ENCODE measurements at regions of chr20 and their contacts with region 1.

Region 1: GRCh38 chr20:41339507-41340326 is 904 bp upstream of the LPIN3 start:
- DNase-seq: peak; percentile 88 to 99
- H3K4me3 ChIP-seq: peak overlapping the region in 3 of 4 experiments; percentile 34 to 62 (median 48); a peak in 7 of 8 replicates
- H3K27ac ChIP-seq: no peak overlapping the region
- H3K4me1 ChIP-seq: peaks cover 3 to 13% (median 6%) of the 10 kb centered on the region in 4 experiments; a peak in 5 of 7 replicates
- H3K27me3 ChIP-seq: peaks cover 0 to 7% (median 2%) of the 10 kb centered on the region in 4 experiments; a peak in 1 of 7 replicates
- CTCF ChIP-seq: peak; percentile 97 to 98 (median 97)
- EP300 ChIP-seq: no peak
- POLR2A ChIP-seq: no peak
- RAD21 ChIP-seq: peak; percentile 99

Region 2: GRCh38 chr20:41136680-41137613 is 202.8 kb before region 1 on chr20 and contains the start of gene PLCG1:
- CTCF ChIA-PET with region 1: interaction called, 25 read pairs
- POLR2A ChIA-PET with region 1: interaction called, 7 read pairs
- DNase-seq: peak; percentile 56 to 94
- H3K4me3 ChIP-seq: peak within 1 kb of the TSS; percentile 80 to 97 (median 90)
- H3K27ac ChIP-seq: peak within 1 kb of the TSS; percentile 93
- H3K4me1 ChIP-seq: peaks cover 25 to 40% (median 27%) of the 10 kb centered on the region in 4 experiments
- H3K27me3 ChIP-seq: peaks cover 0 to 9% (median 2%) of the 10 kb centered on the region in 4 experiments; a peak in 3 of 7 replicates
- CTCF ChIP-seq: no peak; a peak in 1 of 4 replicates
- EP300 ChIP-seq: no peak
- POLR2A ChIP-seq: peak; percentile 75 to 83
- RAD21 ChIP-seq: no peak
- total RNA-seq, gene PLCG1: 151 and 154 TPM in 2 replicates

Region 3: DNA sequence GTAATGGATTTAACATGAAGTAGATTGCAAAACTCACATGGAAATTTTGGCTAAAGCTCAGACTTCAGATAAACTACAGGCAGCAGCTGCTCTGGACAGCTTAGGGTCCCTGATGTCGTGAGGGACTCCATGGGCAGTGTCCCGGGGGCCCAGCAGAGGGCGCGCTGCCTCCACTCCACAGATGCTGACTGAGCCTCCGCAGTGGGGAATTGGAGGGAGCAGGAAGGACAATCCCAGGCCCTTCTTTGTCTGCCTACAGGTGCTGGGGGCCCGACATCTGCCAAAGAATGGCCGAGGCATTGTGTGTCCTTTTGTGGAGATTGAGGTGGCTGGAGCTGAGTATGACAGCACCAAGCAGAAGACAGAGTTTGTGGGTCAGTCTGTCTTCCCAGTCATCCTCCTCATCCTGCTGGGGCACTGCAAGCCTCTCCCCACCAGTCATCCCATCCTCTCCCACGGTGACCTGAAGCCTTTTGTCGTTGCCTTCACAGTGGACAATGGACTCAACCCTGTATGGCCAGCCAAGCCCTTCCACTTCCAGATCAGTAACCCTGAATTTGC is 166.5 kb before region 1 on chr20:
- CTCF ChIA-PET with region 1: interaction called, 112 read pairs
- POLR2A ChIA-PET with region 1: interaction called, 5 read pairs
- DNase-seq: peak; percentile 38 to 93
- H3K4me3 ChIP-seq: no peak overlapping the region
- H3K27ac ChIP-seq: no peak overlapping the region
- H3K4me1 ChIP-seq: no peaks in the 10 kb centered on the region
- H3K27me3 ChIP-seq: no peaks in the 10 kb centered on the region
- CTCF ChIP-seq: peak; percentile 95 to 98 (median 97)
- EP300 ChIP-seq: no peak
- POLR2A ChIP-seq: 0 out of 3 replicates have a peak, but pooled peaks of 1 of the 2 experiments have one; percentile 29
- RAD21 ChIP-seq: peak; percentile 94 to 98

Region 4: GRCh38 chr20:41200446-41201202 is 139.1 kb before region 1 on chr20:
- CTCF ChIA-PET with region 1: interaction called, 13 read pairs
- POLR2A ChIA-PET with region 1: no interaction called
- DNase-seq: no peak
- H3K4me3 ChIP-seq: no peak overlapping the region
- H3K27ac ChIP-seq: no peak overlapping the region
- H3K4me1 ChIP-seq: no peaks in the 10 kb centered on the region
- H3K27me3 ChIP-seq: no peaks in the 10 kb centered on the region
- CTCF ChIP-seq: no peak
- EP300 ChIP-seq: no peak
- POLR2A ChIP-seq: no peak
- RAD21 ChIP-seq: no peak

Region 5: GRCh38 chr20:41329435-41330342 is 10.0 kb before region 1 on chr20:
- CTCF ChIA-PET with region 1: interaction called, 16 read pairs
- POLR2A ChIA-PET with region 1: interaction called, 4 read pairs
- DNase-seq: no peak
- H3K4me3 ChIP-seq: no peak overlapping the region
- H3K27ac ChIP-seq: no peak overlapping the region
- H3K4me1 ChIP-seq: no peaks in the 10 kb centered on the region
- H3K27me3 ChIP-seq: no peaks in the 10 kb centered on the region
- CTCF ChIP-seq: no peak
- EP300 ChIP-seq: no peak
- POLR2A ChIP-seq: no peak
- RAD21 ChIP-seq: no peak

Region 6: DNA sequence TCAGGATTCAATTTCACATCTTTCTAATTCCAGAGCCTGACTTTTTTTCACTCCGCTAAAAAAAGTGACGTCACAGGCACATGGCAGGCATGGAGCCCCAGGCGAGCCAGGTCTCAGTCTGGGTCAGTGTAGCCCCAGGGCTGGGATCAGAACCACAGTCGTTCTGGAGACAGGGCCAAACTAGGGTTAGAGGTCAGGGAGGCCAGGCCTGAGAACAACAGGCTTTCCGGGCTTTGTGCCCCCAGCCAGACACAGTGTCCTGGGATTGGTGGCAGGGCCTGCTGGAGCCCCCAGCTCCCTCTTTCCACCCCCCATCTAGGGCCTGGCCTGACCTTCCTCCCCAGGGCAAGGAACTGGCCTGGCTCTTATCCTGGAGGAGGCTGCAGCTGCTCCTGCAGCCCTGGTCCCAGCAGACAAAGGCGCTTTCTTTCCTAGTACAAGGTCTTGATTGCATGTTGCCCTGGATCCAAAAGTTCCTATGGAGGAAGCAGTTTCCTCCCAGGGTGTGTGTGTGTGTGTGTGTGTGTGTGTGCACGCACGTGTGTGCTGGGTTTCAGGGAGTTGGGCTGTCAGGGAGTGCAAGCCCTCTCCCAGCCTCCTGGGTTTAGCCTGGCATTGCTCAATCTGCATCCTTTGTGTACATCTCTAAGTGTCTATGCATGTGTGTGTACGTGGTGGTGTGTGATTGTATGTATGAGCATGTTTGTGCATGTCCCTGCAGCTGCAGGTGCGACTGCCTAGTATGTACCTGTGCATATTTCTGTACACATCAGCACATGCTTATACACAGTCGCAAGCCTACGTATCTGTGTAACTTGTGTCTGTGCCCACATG is 53.4 kb after region 1 on chr20:
- CTCF ChIA-PET with region 1: interaction called, 16 read pairs
- POLR2A ChIA-PET with region 1: no interaction called
- DNase-seq: no peak
- H3K4me3 ChIP-seq: no peak overlapping the region
- H3K27ac ChIP-seq: no peak overlapping the region
- H3K4me1 ChIP-seq: peaks cover 0 to 9% (median 6%) of the 10 kb centered on the region in 4 experiments; a peak in 5 of 7 replicates
- H3K27me3 ChIP-seq: no peaks in the 10 kb centered on the region
- CTCF ChIP-seq: no peak
- EP300 ChIP-seq: no peak
- POLR2A ChIP-seq: no peak
- RAD21 ChIP-seq: no peak